Dorsolateral prefrontal cortex (tissue), 120 donors: ENCODE measurements at regions of chr19 and their contacts with region 1.

Region 1: GRCh38 chr19:30227661-30228428 is 144.3 kb upstream of the ZNF536 start:
- DNase-seq: peak; percentile 56 to 86 (median 74)
- H3K4me3 ChIP-seq: peak overlapping the region; percentile 36 to 81 (median 64)
- H3K27ac ChIP-seq: peak overlapping the region in 58 of 59 donors; percentile 46 to 96 (median 90)
- H3K27me3 ChIP-seq: peaks cover 0 to 64% (median 32%) of the 10 kb centered on the region in 45 donors
- CTCF ChIP-seq: peak; percentile 19 to 80 (median 64)

Region 2: GRCh38 chr19:30085394-30085793 is 142.5 kb before region 1 on chr19:
- intact Hi-C with region 1: no loop called
- DNase-seq: peak in 3 of 10 donors; percentile 35 to 40 (median 36)
- H3K4me3 ChIP-seq: no peak overlapping the region
- H3K27ac ChIP-seq: no peak overlapping the region
- H3K27me3 ChIP-seq: peaks cover 0 to 4% (median 0%) of the 10 kb centered on the region in 45 donors
- CTCF ChIP-seq: peak in 1 of 56 donors; percentile 8

Region 3: DNA sequence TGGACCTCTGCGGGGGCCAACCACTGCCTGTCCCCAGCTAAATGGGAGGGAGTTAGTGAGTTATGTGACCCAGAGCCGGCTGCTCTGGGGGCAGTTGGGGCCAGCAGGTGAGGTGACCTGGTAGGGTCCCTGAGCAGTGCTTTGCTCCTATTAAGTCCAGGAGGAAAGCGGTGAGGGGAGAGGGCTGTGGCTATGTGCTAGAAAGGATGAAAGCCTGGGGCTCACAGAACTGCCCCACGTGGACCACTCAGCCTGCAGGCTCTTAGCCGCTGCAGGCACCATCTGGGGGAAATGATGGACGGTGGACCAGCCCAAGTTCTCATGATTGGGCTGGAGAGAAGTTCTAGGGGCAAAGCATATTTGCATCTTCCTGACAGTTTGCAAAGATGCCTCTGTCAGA is 76.7 kb after region 1 on chr19:
- intact Hi-C with region 1: loop called in 1 of 2 experiments (anchors 5 kb)
- DNase-seq: no peak
- H3K4me3 ChIP-seq: no peak overlapping the region
- H3K27ac ChIP-seq: peak overlapping the region in 27 of 59 donors; percentile 0 to 83 (median 61)
- H3K27me3 ChIP-seq: no peaks in the 10 kb centered on the region
- CTCF ChIP-seq: no peak

Region 4: GRCh38 chr19:30374865-30375552 is 147.2 kb after region 1 on chr19:
- intact Hi-C with region 1: loop called (anchors 1 kb)
- DNase-seq: peak in 3 of 10 donors; percentile 30 to 47 (median 37)
- H3K4me3 ChIP-seq: peak overlapping the region; percentile 7 to 74 (median 56)
- H3K27ac ChIP-seq: peak overlapping the region; percentile 9 to 99 (median 92)
- H3K27me3 ChIP-seq: peaks cover 0 to 51% (median 11%) of the 10 kb centered on the region in 45 donors
- CTCF ChIP-seq: peak in 14 of 56 donors; percentile 7 to 35 (median 14)

Region 5: GRCh38 chr19:30450100-30450499 is 222.3 kb after region 1 on chr19:
- intact Hi-C with region 1: loop called in 1 of 2 experiments (anchors 2 kb)
- DNase-seq: peak in 8 of 10 donors; percentile 46 to 76 (median 63)
- H3K4me3 ChIP-seq: peak overlapping the region; percentile 20 to 69 (median 50)
- H3K27ac ChIP-seq: peak overlapping the region in 55 of 59 donors; percentile 6 to 86 (median 70)
- H3K27me3 ChIP-seq: peaks cover 0 to 28% (median 3%) of the 10 kb centered on the region in 45 donors
- CTCF ChIP-seq: peak in 4 of 56 donors; percentile 9 to 27 (median 14)

Region 6: GRCh38 chr19:30577551-30578105 is 349.8 kb after region 1 on chr19:
- intact Hi-C with region 1: loop called in 1 of 2 experiments (anchors 10 kb)
- DNase-seq: no peak
- H3K4me3 ChIP-seq: peak overlapping the region in 1 of 59 donors; percentile 4
- H3K27ac ChIP-seq: peak overlapping the region in 56 of 59 donors; percentile 1 to 86 (median 66)
- H3K27me3 ChIP-seq: peaks cover 0 to 9% (median 0%) of the 10 kb centered on the region in 45 donors
- CTCF ChIP-seq: peak in 20 of 56 donors; percentile 5 to 47 (median 23)